ENCODE measurements at regions of chr7 and their contacts with region 1.

Region 1: GRCh38 chr7:24381894-24382505 is 98.0 kb downstream of the NPY start:
- DNase-seq: no peak
- H3K4me3 ChIP-seq: no peak overlapping the region
- H3K27ac ChIP-seq: no peak overlapping the region
- H3K4me1 ChIP-seq: no peaks in the 10 kb centered on the region
- H3K27me3 ChIP-seq: no peaks in the 10 kb centered on the region
- CTCF ChIP-seq: peak; percentile 13 to 16
- POLR2A ChIP-seq: no peak

Region 2: DNA sequence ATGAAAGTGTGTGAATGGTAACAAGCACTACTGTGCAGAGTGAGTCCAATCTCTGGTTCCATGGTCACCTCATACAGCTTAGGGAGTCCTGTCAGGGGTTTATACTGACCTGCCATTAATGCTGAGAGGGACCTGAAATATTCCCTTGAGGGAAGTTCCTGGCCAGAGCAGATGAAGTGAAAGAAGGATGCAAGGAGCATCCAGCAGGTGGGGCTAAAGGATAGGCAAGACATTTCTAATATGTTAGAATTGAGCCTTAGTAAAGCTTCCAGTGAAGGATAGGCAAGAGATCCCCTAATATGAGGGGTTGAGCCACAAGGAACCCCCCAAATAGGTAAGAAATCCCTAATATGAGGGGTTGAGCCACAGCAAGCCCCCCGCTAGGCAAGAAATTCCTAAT is 727.5 kb before region 1 on chr7:
- CTCF ChIA-PET with region 1: no interaction called
- POLR2A ChIA-PET with region 1: no interaction called
- dilution Hi-C with region 1: no loop called
- intact Hi-C with region 1: loop called (anchors 10 kb)
- DNase-seq: peak; percentile 35
- H3K4me3 ChIP-seq: no peak overlapping the region
- H3K27ac ChIP-seq: no peak overlapping the region
- H3K4me1 ChIP-seq: no peaks in the 10 kb centered on the region
- H3K27me3 ChIP-seq: no peaks in the 10 kb centered on the region
- CTCF ChIP-seq: peak; percentile 47 to 50
- POLR2A ChIP-seq: no peak

Region 3: GRCh38 chr7:23863209-23863798 is 518.7 kb before region 1 on chr7:
- CTCF ChIA-PET with region 1: interaction called, 11 read pairs
- POLR2A ChIA-PET with region 1: no interaction called
- dilution Hi-C with region 1: no loop called
- intact Hi-C with region 1: no loop called
- DNase-seq: peak; percentile 15
- H3K4me3 ChIP-seq: no peak overlapping the region
- H3K27ac ChIP-seq: no peak overlapping the region
- H3K4me1 ChIP-seq: no peaks in the 10 kb centered on the region
- H3K27me3 ChIP-seq: no peaks in the 10 kb centered on the region
- CTCF ChIP-seq: peak; percentile 11 to 29
- POLR2A ChIP-seq: no peak

Region 4: DNA sequence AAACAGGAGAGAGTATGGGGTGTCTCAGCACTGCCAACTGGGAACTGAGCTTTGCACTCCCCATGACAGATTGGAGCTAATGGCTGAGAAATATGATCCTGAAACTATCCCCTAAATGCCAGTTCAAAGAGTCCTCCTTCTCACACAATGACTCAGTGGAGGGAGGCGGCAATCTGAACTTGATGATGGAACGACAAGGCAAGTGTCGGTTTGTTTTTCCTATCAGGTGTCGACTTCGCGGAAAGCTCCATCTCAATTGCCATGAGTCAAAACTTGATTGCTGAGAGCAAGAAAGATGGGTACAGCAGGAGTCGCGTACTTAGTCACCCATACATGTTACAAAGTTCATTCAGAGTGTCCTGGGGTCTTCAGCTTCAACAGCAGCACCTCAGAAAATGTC is 45.5 kb before region 1 on chr7:
- CTCF ChIA-PET with region 1: no interaction called
- POLR2A ChIA-PET with region 1: no interaction called
- dilution Hi-C with region 1: no loop called
- intact Hi-C with region 1: no loop called
- DNase-seq: no peak
- H3K4me3 ChIP-seq: no peak overlapping the region
- H3K27ac ChIP-seq: no peak overlapping the region
- H3K4me1 ChIP-seq: no peaks in the 10 kb centered on the region
- H3K27me3 ChIP-seq: no peaks in the 10 kb centered on the region
- CTCF ChIP-seq: no peak
- POLR2A ChIP-seq: no peak

Measured in endothelial cell of umbilical vein (primary cell).